Mammary epithelial cell (primary cell): ENCODE measurements at regions of chr16 and their contacts with region 1.

Region 1: DNA sequence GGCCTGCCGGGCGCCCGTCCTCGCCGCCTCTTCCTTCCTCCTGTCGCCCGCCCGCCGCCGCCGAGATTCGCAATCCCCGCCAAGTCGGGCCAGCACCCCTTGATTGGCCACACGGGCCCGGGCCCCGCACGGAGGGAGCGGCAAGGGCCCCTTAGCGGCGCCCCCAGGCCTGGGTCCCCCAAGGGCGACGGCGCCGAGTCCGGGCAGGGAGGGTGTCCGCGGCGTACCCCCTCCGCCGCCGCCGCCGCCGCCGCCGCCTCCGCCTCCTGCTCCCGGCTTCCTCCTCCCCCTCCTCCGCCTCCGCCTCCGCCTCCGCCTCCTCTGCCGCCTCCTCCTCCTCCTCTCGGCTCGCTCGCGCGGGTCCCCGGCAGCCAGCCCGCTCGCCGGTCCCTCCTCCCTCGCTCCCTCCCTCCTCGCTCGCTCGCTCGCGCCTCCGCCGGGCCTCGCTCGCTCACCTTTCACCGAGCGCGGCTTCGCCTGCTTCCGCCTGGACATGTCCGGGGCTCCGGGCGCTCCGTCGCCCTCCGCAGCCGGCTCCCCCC is 561 bp downstream of the ZNF423 start:
- DNase-seq: peak; percentile 71
- H3K4me3 ChIP-seq: peak overlapping the region; percentile 48 to 54 (median 52)
- H3K27ac ChIP-seq: no peak overlapping the region
- H3K4me1 ChIP-seq: peaks cover 12% of the 10 kb centered on the region
- H3K27me3 ChIP-seq: peaks cover 12% of the 10 kb centered on the region
- CTCF ChIP-seq: no peak

Region 2: GRCh38 chr16:48971571-48972077 is 883.7 kb before region 1 on chr16:
- CTCF ChIA-PET with region 1: no interaction called
- dilution Hi-C with region 1: no loop called
- in situ Hi-C with region 1: no loop called
- intact Hi-C with region 1: no loop called
- DNase-seq: peak; percentile 93
- H3K4me3 ChIP-seq: no peak overlapping the region
- H3K27ac ChIP-seq: peak overlapping the region; percentile 52
- H3K4me1 ChIP-seq: peaks cover 26% of the 10 kb centered on the region
- H3K27me3 ChIP-seq: no peaks in the 10 kb centered on the region
- CTCF ChIP-seq: no peak

Region 3: GRCh38 chr16:49407873-49408550 is 447.3 kb before region 1 on chr16:
- CTCF ChIA-PET with region 1: no interaction called
- dilution Hi-C with region 1: no loop called
- in situ Hi-C with region 1: no loop called
- intact Hi-C with region 1: loop called (anchors 1 kb)
- DNase-seq: peak; percentile 67
- H3K4me3 ChIP-seq: no peak overlapping the region
- H3K27ac ChIP-seq: no peak overlapping the region
- H3K4me1 ChIP-seq: no peaks in the 10 kb centered on the region
- H3K27me3 ChIP-seq: no peaks in the 10 kb centered on the region
- CTCF ChIP-seq: peak; percentile 63 to 90

Region 4: DNA sequence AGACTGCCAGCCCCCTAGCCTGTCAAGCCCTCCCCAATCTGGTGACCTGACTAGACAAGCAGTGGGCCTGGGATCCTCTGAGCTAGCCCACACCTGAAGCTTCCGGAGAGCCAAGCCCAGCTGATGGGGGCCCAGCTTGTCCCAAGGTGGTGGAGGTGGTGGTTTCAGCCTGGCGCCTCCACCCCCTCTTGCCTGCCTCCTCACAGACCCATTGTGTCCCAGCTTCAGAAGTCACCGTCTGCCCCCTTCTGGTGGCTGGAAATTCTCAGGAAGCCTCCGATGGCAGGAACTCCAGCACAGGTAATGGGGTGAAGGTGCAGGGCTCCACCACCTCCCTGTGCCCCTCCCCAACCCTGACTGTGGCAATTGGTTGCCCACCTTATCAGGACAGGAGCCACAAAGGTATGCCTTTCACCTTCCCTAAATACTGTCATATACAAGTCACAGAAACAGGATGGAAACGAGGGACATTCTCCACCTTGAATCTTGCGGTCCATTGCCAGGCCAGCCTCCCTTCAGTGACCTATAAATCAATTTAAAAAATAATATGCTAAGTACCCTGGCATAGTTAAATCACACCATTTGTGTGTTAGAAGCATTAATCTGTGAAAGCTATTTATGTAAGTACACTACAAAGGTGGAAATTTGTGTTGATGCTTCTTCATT is 66.6 kb after region 1 on chr16:
- CTCF ChIA-PET with region 1: no interaction called
- dilution Hi-C with region 1: no loop called
- in situ Hi-C with region 1: no loop called
- intact Hi-C with region 1: loop called (anchors 5 kb)
- DNase-seq: peak; percentile 9
- H3K4me3 ChIP-seq: no peak overlapping the region
- H3K27ac ChIP-seq: no peak overlapping the region
- H3K4me1 ChIP-seq: no peaks in the 10 kb centered on the region
- H3K27me3 ChIP-seq: no peaks in the 10 kb centered on the region
- CTCF ChIP-seq: peak; percentile 27 to 55